ENCODE measurements at regions of chr17 and their contacts with region 1.

Region 1: GRCh38 chr17:69723742-69724141 is 309.2 kb downstream of the MAP2K6 start:
- DNase-seq: no peak
- H3K4me3 ChIP-seq: no peak overlapping the region
- H3K27ac ChIP-seq: no peak overlapping the region
- H3K4me1 ChIP-seq: peaks cover 7% of the 10 kb centered on the region
- H3K27me3 ChIP-seq: no peaks in the 10 kb centered on the region
- CTCF ChIP-seq: no peak

Region 2: DNA sequence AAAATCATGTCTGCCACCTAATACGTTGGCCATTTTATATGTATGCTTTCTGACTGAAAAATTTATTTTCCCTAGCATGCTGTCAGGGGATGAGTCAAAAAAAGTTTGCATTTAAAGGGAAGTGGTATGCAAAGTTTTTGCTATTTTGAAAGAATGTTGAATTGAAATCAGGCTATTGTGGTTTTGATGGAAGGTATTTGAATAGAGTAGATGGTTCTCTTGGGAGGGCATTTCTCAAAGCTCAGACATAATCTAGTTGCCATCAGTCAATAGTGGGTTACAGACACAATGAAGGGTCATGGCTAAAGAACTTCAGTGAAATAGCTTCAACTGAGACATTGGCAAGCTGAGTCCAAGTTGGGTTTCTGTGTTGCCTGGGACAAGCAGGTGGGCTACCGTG is 206.8 kb before region 1 on chr17:
- intact Hi-C with region 1: no loop called
- DNase-seq: no peak
- H3K4me3 ChIP-seq: no peak overlapping the region
- H3K27ac ChIP-seq: no peak overlapping the region
- H3K4me1 ChIP-seq: no peaks in the 10 kb centered on the region
- H3K27me3 ChIP-seq: no peaks in the 10 kb centered on the region
- CTCF ChIP-seq: no peak

Region 3: GRCh38 chr17:69779378-69780214 is 55.9 kb after region 1 on chr17:
- intact Hi-C with region 1: loop called (anchors 10 kb)
- DNase-seq: no peak
- H3K4me3 ChIP-seq: no peak overlapping the region
- H3K27ac ChIP-seq: no peak overlapping the region
- H3K4me1 ChIP-seq: no peaks in the 10 kb centered on the region
- H3K27me3 ChIP-seq: no peaks in the 10 kb centered on the region
- CTCF ChIP-seq: no peak

Region 4: GRCh38 chr17:69851736-69852135 is 128.0 kb after region 1 on chr17:
- intact Hi-C with region 1: no loop called
- DNase-seq: no peak
- H3K4me3 ChIP-seq: no peak overlapping the region
- H3K27ac ChIP-seq: no peak overlapping the region
- H3K4me1 ChIP-seq: peaks cover 20% of the 10 kb centered on the region
- H3K27me3 ChIP-seq: no peaks in the 10 kb centered on the region
- CTCF ChIP-seq: no peak

Region 5: GRCh38 chr17:70558821-70559220 is 835.1 kb after region 1 on chr17:
- intact Hi-C with region 1: no loop called
- DNase-seq: no peak
- H3K4me3 ChIP-seq: no peak overlapping the region
- H3K27ac ChIP-seq: no peak overlapping the region
- H3K4me1 ChIP-seq: peaks cover 13% of the 10 kb centered on the region
- H3K27me3 ChIP-seq: no peaks in the 10 kb centered on the region
- CTCF ChIP-seq: no peak